Right cardiac atrium (tissue), 5 donors: ENCODE measurements at regions of chr2 and their contacts with region 1.

Region 1: DNA sequence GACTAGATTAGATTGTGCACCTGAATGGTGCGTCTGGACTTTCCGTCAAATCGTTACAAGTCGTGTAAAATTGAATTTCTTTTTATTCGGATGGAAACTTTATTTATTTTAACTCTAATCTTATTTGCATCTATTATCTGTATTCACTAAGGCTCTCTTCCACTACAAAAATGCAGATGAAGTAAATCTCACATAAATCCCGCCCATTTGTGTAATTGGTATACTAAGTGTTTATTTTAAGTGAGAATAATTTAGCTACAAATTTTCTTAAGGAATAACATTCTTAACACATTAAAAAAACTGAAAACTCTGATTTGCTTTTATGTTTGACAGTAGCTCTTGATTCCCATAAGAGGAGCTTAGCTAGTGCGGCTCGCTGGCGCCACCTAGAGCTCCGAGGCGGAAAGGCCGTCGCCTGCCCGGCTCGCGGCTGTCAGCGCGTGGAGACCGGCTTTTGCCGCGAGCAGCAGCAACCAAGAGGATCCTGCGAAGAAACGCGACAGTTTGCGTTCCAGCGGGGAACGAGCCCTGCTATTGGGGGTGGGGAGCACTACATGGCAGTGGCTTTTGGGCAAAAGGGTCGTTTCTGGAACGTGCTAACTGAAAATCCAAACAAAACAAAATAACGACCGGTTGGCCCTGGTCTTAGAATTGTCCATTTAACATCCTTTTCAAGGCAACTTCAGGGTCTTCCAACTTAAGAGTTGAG is 6.7 kb downstream of the SP9 start:
- DNase-seq: peak; percentile 81 to 95 (median 95)
- ATAC-seq: peak; percentile 79 to 92
- H3K4me3 ChIP-seq: no peak overlapping the region
- H3K27ac ChIP-seq: no peak overlapping the region
- H3K4me1 ChIP-seq: no peaks in the 10 kb centered on the region
- H3K27me3 ChIP-seq: no peaks in the 10 kb centered on the region

Region 2: GRCh38 chr2:173402405-173402974 is 939.0 kb before region 1 on chr2:
- intact Hi-C with region 1: loop called (anchors 5 to 10 kb)
- DNase-seq: peak; percentile 77 to 87 (median 86)
- ATAC-seq: peak; percentile 94 to 96
- H3K4me3 ChIP-seq: peak overlapping the region; percentile 44
- H3K27ac ChIP-seq: no peak overlapping the region
- H3K4me1 ChIP-seq: no peaks in the 10 kb centered on the region
- H3K27me3 ChIP-seq: no peaks in the 10 kb centered on the region

Region 3: DNA sequence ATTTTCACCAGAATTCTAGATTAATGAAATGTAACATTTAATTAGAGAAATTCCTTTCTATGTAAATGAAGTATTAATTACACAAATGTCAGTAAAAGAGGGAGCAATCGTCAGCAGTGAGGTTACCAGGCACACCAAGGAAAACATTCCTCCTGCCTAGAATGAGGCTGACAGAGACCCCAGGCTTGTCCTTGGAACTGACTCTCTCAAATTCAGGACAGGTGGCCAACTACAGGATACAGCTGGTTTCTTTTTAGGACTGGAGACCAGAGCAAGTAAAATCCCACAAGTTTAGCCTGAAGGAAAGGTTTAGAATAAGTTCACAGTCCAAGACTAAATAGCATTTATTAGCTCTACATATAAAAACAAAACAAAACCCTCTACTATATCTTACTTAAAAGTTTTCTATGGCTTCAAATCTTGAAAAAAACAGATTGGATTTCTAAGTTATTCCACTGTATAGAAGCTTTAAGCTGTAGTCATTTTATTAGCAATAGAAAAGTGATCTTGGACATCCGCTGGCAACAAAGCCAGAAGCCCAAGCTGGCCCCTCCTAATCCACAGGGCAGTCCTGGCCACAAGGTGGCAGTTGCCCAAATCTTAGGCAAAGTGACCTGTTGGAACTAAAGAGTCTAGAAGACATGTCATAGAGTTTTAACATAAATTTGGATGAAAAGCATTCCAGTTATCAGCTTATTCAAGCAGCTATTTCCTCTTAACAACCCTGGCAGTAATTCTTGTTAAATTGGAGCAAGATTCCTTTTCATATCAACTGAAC is 457.2 kb before region 1 on chr2:
- intact Hi-C with region 1: loop called in 1 of 4 experiments (anchors 10 kb)
- DNase-seq: peak; percentile 66 to 85 (median 78)
- ATAC-seq: peak; percentile 80 to 84
- H3K4me3 ChIP-seq: no peak overlapping the region
- H3K27ac ChIP-seq: no peak overlapping the region
- H3K4me1 ChIP-seq: no peaks in the 10 kb centered on the region
- H3K27me3 ChIP-seq: no peaks in the 10 kb centered on the region

Region 4: GRCh38 chr2:173934895-173935294 is 406.5 kb before region 1 on chr2:
- intact Hi-C with region 1: no loop called
- DNase-seq: no peak
- ATAC-seq: no peak
- H3K4me3 ChIP-seq: no peak overlapping the region
- H3K27ac ChIP-seq: no peak overlapping the region
- H3K4me1 ChIP-seq: peaks cover 3% of the 10 kb centered on the region
- H3K27me3 ChIP-seq: no peaks in the 10 kb centered on the region

Region 5: DNA sequence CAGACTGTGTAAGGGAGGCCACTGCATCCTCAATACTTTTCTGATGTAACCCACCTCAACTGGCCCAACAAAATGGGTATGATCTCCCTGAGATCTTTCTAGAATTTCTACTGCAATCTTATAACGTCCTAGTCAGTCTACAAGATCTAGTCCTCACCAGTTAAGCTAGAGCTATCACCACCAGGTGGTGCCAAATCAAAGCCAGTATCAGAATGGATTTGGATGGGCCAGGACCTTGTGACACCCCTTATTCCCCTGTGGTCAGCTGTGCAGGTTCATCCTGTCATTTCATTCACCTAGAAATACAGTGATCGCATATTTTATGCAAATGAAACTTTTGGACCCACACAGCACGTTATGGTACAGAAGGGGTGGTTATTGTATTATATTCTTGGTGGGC is 183.4 kb before region 1 on chr2:
- intact Hi-C with region 1: loop called in 1 of 4 experiments (anchors 10 kb)
- DNase-seq: no peak
- ATAC-seq: peak in 1 of 2 donors; percentile 35
- H3K4me3 ChIP-seq: no peak overlapping the region
- H3K27ac ChIP-seq: no peak overlapping the region
- H3K4me1 ChIP-seq: no peaks in the 10 kb centered on the region
- H3K27me3 ChIP-seq: no peaks in the 10 kb centered on the region

Region 6: GRCh38 chr2:174412256-174412655 is 70.8 kb after region 1 on chr2:
- intact Hi-C with region 1: no loop called
- DNase-seq: no peak
- ATAC-seq: no peak
- H3K4me3 ChIP-seq: no peak overlapping the region
- H3K27ac ChIP-seq: no peak overlapping the region
- H3K4me1 ChIP-seq: no peaks in the 10 kb centered on the region
- H3K27me3 ChIP-seq: no peaks in the 10 kb centered on the region